Vagina (tissue), 2 donors: ENCODE measurements at regions of chr19 and their contacts with region 1.

Region 1: DNA sequence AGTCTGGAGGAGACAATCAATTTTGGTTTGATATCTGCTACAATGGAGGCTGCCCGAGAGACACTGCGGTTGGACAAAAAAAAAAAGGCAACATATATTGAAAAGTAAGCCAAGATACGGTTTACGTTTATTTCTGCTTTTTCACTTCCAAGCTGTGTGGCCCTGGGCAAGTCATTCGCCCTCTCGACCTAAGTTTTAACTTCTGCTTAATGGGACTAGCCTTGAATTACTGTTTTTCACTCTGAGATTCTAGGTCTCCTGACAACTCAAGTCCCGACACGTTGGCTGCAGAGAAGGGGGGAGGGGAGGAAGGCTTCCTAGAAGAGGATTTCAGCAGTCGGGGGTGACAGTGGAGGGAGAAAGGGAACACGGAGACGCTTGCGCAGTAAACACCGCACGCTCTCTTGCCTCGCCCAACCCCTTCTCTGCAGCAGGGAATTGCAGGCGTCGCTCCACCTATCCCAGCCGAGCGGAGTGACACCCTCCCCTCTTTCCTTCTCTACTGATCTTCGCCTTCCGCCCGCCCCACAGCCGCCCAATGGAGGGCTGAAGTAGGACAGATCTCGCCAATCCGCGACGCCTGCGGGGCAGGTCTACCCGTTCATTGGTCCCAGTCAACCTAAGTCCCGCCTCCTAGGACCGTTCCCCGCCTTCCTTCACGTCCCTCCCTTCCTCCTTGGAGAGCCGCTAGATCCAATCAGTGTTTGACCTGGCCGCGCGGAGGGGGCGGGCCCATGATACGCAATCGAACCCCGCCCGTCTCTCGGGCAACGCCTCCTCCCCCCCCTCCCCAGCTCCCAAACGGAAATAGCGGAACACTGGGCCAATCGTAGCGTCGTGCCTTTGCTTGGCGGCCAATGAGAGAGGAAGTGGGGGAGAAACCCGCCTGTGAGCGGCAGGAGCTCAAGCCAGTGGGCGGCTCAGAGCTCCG is 529 bp upstream of the AP2A1 start:
- DNase-seq: peak; percentile 100
- H3K4me3 ChIP-seq: peak overlapping the region; percentile 66 to 81
- H3K27ac ChIP-seq: peak overlapping the region; percentile 96
- H3K4me1 ChIP-seq: peaks cover 31% of the 10 kb centered on the region
- H3K27me3 ChIP-seq: no peaks in the 10 kb centered on the region
- CTCF ChIP-seq: no peak
- POLR2A ChIP-seq: peak; percentile 55 to 74

Region 2: DNA sequence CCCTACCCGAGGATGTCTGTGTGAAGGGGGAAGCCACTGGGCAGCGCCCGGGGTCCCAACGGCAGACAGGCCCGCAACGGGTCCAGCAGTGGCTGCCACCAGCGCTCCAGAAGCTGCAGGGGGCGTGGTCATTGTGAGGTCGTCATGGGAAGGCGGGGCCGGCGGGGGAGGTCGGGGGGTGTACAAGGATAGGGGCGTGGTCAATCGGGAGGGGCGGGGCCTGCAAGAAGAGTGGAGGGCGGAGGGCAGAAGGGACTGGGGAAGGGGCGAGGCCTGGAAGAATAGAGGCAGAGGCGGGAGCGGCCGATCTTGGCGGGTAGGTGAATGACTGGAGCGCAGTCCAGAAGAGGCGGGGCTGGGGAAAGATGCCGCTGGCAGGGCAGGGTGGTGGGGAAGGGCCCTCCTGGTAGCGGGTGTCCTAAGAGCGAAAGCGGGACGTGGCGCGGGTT is 42.5 kb after region 1 on chr19:
- intact Hi-C with region 1: loop called (anchors 5 kb)
- DNase-seq: no peak
- H3K4me3 ChIP-seq: peak overlapping the region; percentile 66 to 92
- H3K27ac ChIP-seq: peak overlapping the region; percentile 90
- H3K4me1 ChIP-seq: peaks cover 31% of the 10 kb centered on the region
- H3K27me3 ChIP-seq: no peaks in the 10 kb centered on the region
- CTCF ChIP-seq: no peak
- POLR2A ChIP-seq: peak in 1 of 2 donors; percentile 47

Region 3: GRCh38 chr19:49877020-49877878 is 111.0 kb after region 1 on chr19 and contains the starts of genes AKT1S1 and TBC1D17:
- intact Hi-C with region 1: loop called (anchors 5 kb)
- DNase-seq: peak; percentile 100
- H3K4me3 ChIP-seq: peak within 1 kb of the TSS; percentile 80 to 98
- H3K27ac ChIP-seq: peak within 1 kb of the TSS; percentile 99
- H3K4me1 ChIP-seq: peaks cover 32% of the 10 kb centered on the region
- H3K27me3 ChIP-seq: no peaks in the 10 kb centered on the region
- CTCF ChIP-seq: no peak
- POLR2A ChIP-seq: peak in 1 of 2 donors; percentile 79
- total RNA-seq, gene AKT1S1: 16.9 TPM
- total RNA-seq, gene TBC1D17: 34.9 TPM